ENCODE measurements at regions of chr4 and their contacts with region 1.

Region 1: GRCh38 chr4:185039508-185040273 is 21.4 kb downstream of the HELT start:
- DNase-seq: peak in 1 of 2 donors; percentile 75
- ATAC-seq: peak; percentile 71 to 88 (median 80)
- H3K4me3 ChIP-seq: no peak overlapping the region
- H3K4me3 Mint-ChIP-seq: no peak overlapping the region
- H3K27ac ChIP-seq: no peak overlapping the region
- H3K27ac Mint-ChIP-seq: no peak overlapping the region
- H3K4me1 ChIP-seq: no peaks in the 10 kb centered on the region
- H3K4me1 Mint-ChIP-seq: peaks cover 10% of the 10 kb centered on the region in 2 donors
- H3K27me3 ChIP-seq: peaks cover 2% of the 10 kb centered on the region
- H3K27me3 Mint-ChIP-seq: peaks cover 24 to 29% of the 10 kb centered on the region in 2 donors
- CTCF ChIP-seq: peak; percentile 77

Region 2: DNA sequence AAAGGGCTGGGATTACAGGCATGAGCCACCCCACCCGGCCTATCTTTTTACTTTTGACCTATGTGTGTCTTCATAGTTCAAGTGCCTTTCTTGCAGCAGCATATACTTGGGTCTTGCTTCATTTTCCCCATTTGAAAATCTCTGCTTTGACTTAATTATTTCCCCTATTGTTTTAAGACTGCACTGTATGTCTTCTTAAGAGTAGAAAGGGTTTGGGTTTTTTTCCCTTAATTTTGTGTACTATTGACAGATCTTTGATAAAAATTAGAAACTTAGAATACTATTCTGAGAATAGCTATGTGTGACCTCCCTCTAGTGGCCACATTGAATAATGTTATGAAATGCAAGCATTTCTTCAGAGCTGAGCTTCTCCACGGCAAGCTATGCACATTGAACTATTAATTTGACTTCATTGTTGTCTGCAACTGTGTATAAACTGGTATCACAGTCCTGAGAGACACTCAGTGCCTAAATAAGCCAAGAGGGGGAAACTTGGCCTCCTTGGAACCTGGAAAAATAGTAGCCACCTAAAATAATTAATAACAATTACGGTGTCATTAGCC is 94.7 kb after region 1 on chr4:
- intact Hi-C with region 1: loop called (anchors 1 kb)
- DNase-seq: peak in 1 of 2 donors; percentile 71
- ATAC-seq: peak; percentile 69 to 75 (median 70)
- H3K4me3 ChIP-seq: no peak overlapping the region
- H3K4me3 Mint-ChIP-seq: no peak overlapping the region
- H3K27ac ChIP-seq: no peak overlapping the region
- H3K27ac Mint-ChIP-seq: no peak overlapping the region
- H3K4me1 ChIP-seq: no peaks in the 10 kb centered on the region
- H3K4me1 Mint-ChIP-seq: peaks cover 0 to 3% of the 10 kb centered on the region in 2 donors
- H3K27me3 ChIP-seq: peaks cover 4% of the 10 kb centered on the region
- H3K27me3 Mint-ChIP-seq: peaks cover 19 to 44% of the 10 kb centered on the region in 2 donors
- CTCF ChIP-seq: peak; percentile 91

Region 3: GRCh38 chr4:185183619-185184281 is 144.1 kb after region 1 on chr4:
- intact Hi-C with region 1: loop called (anchors 1 kb)
- DNase-seq: peak; percentile 45 to 93
- ATAC-seq: peak; percentile 67 to 84 (median 78)
- H3K4me3 ChIP-seq: no peak overlapping the region
- H3K4me3 Mint-ChIP-seq: no peak overlapping the region
- H3K27ac ChIP-seq: no peak overlapping the region
- H3K27ac Mint-ChIP-seq: no peak overlapping the region
- H3K4me1 ChIP-seq: no peaks in the 10 kb centered on the region
- H3K4me1 Mint-ChIP-seq: peaks cover 0 to 23% of the 10 kb centered on the region in 2 donors
- H3K27me3 ChIP-seq: no peaks in the 10 kb centered on the region
- H3K27me3 Mint-ChIP-seq: no peaks in the 10 kb centered on the region
- CTCF ChIP-seq: peak; percentile 82

Region 4: GRCh38 chr4:185597532-185598188 is 558.0 kb after region 1 on chr4:
- intact Hi-C with region 1: loop called (anchors 5 kb)
- DNase-seq: peak; percentile 53 to 82
- ATAC-seq: peak; percentile 69 to 78 (median 76)
- H3K4me3 ChIP-seq: no peak overlapping the region
- H3K4me3 Mint-ChIP-seq: no peak overlapping the region
- H3K27ac ChIP-seq: no peak overlapping the region
- H3K27ac Mint-ChIP-seq: no peak overlapping the region
- H3K4me1 ChIP-seq: no peaks in the 10 kb centered on the region
- H3K4me1 Mint-ChIP-seq: peaks cover 0 to 5% of the 10 kb centered on the region in 2 donors
- H3K27me3 ChIP-seq: no peaks in the 10 kb centered on the region
- H3K27me3 Mint-ChIP-seq: peaks cover 6 to 10% of the 10 kb centered on the region in 2 donors
- CTCF ChIP-seq: peak; percentile 99

Region 5: GRCh38 chr4:186037692-186038658 is 998.3 kb after region 1 on chr4:
- intact Hi-C with region 1: loop called (anchors 1 kb)
- DNase-seq: peak in 1 of 2 donors; percentile 65
- ATAC-seq: peak; percentile 70 to 79 (median 72)
- H3K4me3 ChIP-seq: no peak overlapping the region
- H3K4me3 Mint-ChIP-seq: peak overlapping the region; percentile 26
- H3K27ac ChIP-seq: no peak overlapping the region
- H3K27ac Mint-ChIP-seq: no peak overlapping the region
- H3K4me1 ChIP-seq: no peaks in the 10 kb centered on the region
- H3K4me1 Mint-ChIP-seq: no peaks in the 10 kb centered on the region
- H3K27me3 ChIP-seq: no peaks in the 10 kb centered on the region
- H3K27me3 Mint-ChIP-seq: peaks cover 14 to 30% of the 10 kb centered on the region in 2 donors
- CTCF ChIP-seq: peak; percentile 84

Measured in natural killer cell (primary cell).